ENCODE measurements at regions of chr10 and their contacts with region 1.

Region 1: GRCh38 chr10:113704637-113705343 is 25.1 kb downstream of the CASP7 start:
- DNase-seq: peak; percentile 51
- ATAC-seq: peak; percentile 73
- H3K4me3 ChIP-seq: no peak overlapping the region
- H3K27ac ChIP-seq: no peak overlapping the region
- H3K4me1 ChIP-seq: peaks cover 8% of the 10 kb centered on the region; the same call in 1 of the 2 replicates
- H3K27me3 ChIP-seq: no peaks in the 10 kb centered on the region
- CTCF ChIP-seq: peak; percentile 73

Region 2: DNA sequence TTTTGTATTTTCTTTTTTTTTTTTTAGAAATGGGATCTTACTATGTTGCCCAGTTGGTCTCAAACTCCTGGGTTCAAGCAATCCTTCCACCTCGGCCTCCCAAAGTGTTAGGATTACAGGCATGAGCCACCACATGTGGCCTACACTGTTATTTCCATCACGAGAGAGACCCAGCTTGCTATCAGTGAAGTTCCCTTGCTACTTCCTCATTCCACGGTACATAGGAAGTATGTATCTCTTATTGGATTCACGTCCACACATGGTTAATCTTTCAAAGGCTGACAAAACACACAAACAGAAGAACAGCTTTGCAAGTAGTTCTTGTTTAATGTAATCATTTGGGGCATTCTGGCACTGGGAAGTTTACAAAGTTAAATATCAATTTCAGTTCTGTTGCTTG is 98.2 kb after region 1 on chr10:
- CTCF ChIA-PET with region 1: no interaction called
- POLR2A ChIA-PET with region 1: no interaction called
- intact Hi-C with region 1: loop called (anchors 1 kb)
- DNase-seq: no peak
- ATAC-seq: no peak
- H3K4me3 ChIP-seq: no peak overlapping the region
- H3K27ac ChIP-seq: no peak overlapping the region
- H3K4me1 ChIP-seq: no peaks in the 10 kb centered on the region
- H3K27me3 ChIP-seq: peaks cover 11% of the 10 kb centered on the region; the same call in 1 of the 2 replicates
- CTCF ChIP-seq: no peak

Measured in PC-3 (cell line).